MCF 10A (cell line): ENCODE measurements at regions of chr1 and their contacts with region 1.

Region 1: DNA sequence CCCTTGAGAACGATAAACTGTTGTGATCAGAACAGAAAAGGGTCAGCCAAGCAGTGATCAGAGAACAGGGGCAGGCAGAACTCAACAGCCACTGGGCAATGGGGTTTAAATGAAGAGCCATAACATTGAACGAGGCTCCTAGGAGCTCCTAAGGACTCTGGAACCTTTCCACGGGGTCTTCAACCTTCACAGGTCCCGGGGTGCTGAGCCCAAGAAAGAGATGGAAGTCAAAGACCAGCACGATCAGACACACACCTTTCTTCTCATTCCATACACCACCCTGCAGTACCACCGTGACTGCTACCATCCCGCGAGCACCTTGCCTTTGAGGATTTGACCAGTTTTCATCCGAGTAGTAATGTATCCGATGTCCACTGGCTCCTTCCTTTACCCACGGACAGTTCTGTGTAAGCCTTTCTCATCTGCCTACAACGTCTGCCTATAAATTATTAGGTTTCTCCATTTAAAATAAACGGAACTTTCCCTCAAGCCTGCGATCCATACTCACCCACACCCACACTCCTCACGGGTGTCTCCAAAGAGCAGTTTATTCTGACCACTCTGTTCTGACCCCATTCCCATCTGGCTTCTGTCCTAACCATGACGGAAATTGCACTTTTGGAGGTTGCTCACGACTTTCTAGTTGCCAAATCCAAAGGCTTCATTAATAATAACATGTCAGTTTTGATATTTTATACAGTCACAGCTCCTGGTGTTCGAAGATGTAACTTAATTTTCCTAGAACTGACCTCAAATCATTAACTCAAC is 16.8 kb upstream of the HHAT start:
- DNase-seq: no peak
- H3K4me3 Mint-ChIP-seq: no peak overlapping the region
- H3K27ac Mint-ChIP-seq: no peak overlapping the region
- H3K4me1 Mint-ChIP-seq: peaks cover 6% of the 10 kb centered on the region
- H3K27me3 Mint-ChIP-seq: peaks cover 36% of the 10 kb centered on the region
- CTCF ChIP-seq: no peak

Region 2: DNA sequence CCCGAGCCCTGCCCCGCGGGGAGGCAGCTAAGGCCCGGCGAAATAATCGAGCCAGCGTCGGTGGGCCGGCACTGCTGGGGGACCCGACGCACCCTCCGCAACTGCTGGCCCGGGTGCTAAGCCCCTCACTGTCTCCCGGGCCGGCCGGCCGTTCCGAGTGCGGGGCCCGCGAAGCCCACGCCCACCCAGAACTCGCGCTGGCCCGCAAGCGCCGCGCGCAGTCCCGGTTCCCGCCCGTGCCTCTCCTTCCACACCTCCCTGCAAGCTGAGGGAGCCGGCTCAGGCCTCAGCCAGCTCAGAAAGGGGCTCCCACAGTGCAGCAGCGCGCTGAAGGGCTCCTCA is 422.9 kb before region 1 on chr1:
- CTCF ChIA-PET with region 1: no interaction called
- POLR2A ChIA-PET with region 1: no interaction called
- intact Hi-C with region 1: no loop called
- DNase-seq: no peak
- H3K4me3 Mint-ChIP-seq: no peak overlapping the region
- H3K27ac Mint-ChIP-seq: no peak overlapping the region
- H3K4me1 Mint-ChIP-seq: peaks cover 54% of the 10 kb centered on the region
- H3K27me3 Mint-ChIP-seq: no peaks in the 10 kb centered on the region
- CTCF ChIP-seq: no peak

Region 3: GRCh38 chr1:210099921-210100320 is 212.0 kb before region 1 on chr1:
- CTCF ChIA-PET with region 1: no interaction called
- POLR2A ChIA-PET with region 1: no interaction called
- intact Hi-C with region 1: no loop called
- DNase-seq: no peak
- H3K4me3 Mint-ChIP-seq: no peak overlapping the region
- H3K27ac Mint-ChIP-seq: no peak overlapping the region
- H3K4me1 Mint-ChIP-seq: no peaks in the 10 kb centered on the region
- H3K27me3 Mint-ChIP-seq: peaks cover 64% of the 10 kb centered on the region
- CTCF ChIP-seq: no peak

Region 4: DNA sequence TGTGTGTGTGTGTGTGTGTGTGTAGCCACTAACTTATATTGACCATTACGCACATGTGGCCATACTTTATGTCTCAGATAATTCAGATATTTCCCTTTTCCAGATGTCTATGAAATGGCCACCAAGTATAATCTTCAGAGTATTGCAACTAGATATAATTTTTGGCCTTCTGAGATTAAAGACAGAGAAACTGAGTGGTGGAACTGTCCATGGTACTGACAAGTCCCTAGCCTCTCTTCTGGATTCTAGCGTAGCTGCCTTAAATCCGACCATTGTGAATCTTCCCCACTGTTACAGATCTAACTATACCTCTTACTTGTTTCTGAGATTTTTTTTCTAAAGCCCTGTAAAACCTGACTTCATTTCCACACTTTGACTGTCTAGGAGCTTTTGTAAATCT is 179.3 kb before region 1 on chr1:
- CTCF ChIA-PET with region 1: interaction called, 20 read pairs
- POLR2A ChIA-PET with region 1: interaction called, 3 read pairs
- intact Hi-C with region 1: no loop called
- DNase-seq: peak; percentile 69
- H3K4me3 Mint-ChIP-seq: no peak overlapping the region
- H3K27ac Mint-ChIP-seq: no peak overlapping the region
- H3K4me1 Mint-ChIP-seq: no peaks in the 10 kb centered on the region
- H3K27me3 Mint-ChIP-seq: peaks cover 42% of the 10 kb centered on the region
- CTCF ChIP-seq: no peak

Region 5: DNA sequence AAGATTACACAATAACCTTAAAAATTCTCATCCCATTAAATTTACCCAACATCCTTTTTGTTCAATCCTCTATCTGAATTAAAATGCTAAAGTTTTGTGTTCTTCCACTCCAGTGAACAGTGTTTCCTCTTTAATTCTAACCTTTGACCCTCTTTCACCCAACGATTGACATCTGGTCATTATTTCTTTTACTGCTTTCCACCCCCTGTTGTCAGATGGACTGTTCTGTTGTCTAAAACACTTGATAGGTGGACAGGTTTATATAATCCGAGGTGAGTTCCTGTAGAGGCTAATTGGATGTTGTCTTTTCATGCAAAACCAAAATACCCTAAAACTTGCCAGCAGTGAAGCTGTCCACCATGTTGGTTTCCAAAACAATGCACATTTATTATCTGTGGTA is 152.7 kb before region 1 on chr1:
- CTCF ChIA-PET with region 1: interaction called, 11 read pairs
- POLR2A ChIA-PET with region 1: no interaction called
- intact Hi-C with region 1: no loop called
- DNase-seq: no peak
- H3K4me3 Mint-ChIP-seq: no peak overlapping the region
- H3K27ac Mint-ChIP-seq: no peak overlapping the region
- H3K4me1 Mint-ChIP-seq: no peaks in the 10 kb centered on the region
- H3K27me3 Mint-ChIP-seq: no peaks in the 10 kb centered on the region
- CTCF ChIP-seq: no peak

Region 6: DNA sequence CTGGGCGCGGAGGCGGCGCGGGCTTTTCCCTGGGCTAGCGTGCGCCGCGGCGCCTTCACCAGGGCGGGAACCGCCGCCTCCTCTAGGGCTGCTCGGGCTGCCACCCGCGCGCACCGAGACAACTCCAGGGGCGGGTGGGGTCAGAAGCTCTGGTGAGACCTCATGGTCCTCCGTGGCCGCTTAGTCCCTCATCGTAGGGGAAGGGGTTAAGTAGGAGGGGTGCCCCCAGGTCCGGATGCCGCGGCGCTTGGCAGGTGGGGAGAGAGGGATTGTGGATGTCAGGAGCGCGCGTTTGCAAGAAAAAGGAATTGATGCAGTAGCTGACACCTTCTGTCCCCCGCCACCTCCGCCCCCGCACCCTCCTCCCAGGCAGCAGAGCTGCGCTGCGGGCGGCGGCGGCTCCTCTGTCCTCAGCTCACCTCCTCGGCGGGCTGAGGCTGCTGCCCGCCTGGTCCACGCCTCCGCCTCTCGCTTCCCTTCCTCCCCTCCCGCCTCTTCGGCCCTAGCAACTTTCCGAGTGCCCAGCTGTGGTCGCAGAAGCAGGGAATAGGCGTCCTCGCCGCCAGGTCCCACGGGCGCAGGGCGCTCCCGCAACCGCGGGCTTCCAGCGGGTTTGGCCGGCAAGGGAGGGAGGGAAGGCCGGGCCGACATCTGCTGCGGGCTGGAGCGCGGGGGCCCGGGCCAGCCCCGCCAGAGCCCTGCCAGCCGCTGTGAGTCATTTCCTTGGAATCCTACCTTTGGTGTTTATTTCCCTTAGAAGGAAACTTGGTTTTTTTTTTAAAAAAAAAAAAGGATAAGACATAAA is 78.5 kb before region 1 on chr1:
- CTCF ChIA-PET with region 1: interaction called, 7 read pairs
- POLR2A ChIA-PET with region 1: interaction called, 5 read pairs
- intact Hi-C with region 1: loop called (anchors 2 kb)
- DNase-seq: peak; percentile 89
- H3K4me3 Mint-ChIP-seq: peak overlapping the region; percentile 69
- H3K27ac Mint-ChIP-seq: no peak overlapping the region
- H3K4me1 Mint-ChIP-seq: peaks cover 17% of the 10 kb centered on the region
- H3K27me3 Mint-ChIP-seq: no peaks in the 10 kb centered on the region
- CTCF ChIP-seq: no peak

Region 7: DNA sequence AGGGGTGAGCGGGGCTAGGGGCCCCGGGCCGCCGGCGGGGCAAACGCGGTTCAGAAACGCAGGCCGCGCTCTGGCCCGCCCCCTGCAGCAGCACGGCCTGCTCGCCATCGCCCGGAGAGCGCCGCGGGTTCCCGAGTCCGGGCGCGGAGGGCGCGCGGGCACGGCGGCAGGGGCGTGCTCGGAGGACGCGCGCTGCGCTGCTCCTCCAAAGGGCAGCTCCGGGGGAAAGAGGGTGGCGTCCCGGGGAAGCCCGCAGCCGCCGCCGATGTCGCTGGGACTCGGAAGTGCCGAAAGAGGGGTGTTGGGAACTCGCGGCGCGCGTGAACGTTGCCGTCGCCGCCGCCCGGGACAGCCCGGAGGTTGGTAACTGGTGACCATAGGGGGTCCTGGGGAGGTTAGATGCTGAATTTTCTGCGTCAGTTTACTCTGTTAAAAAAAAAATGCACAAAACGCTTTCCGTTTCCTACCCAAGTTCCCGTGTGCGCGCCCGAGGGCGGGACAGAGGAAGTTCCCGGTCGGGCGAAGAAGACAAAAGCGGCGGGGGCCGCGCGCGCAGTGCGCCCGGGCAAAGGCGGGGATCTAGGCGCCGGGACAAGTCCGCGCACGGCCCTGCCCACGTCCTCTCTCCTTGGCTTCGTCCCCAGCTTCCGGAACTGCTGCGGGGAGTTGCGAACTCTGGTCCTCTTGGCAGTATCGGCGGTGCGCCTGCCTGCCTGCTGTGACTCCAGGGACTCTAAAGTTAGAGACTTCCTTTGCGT is 17.0 kb after region 1 on chr1 and contains the start of gene HHAT:
- CTCF ChIA-PET with region 1: interaction called, 25 read pairs
- POLR2A ChIA-PET with region 1: interaction called, 7 read pairs
- intact Hi-C with region 1: no loop called
- DNase-seq: peak; percentile 95
- H3K4me3 Mint-ChIP-seq: peak within 1 kb of the TSS; percentile 81
- H3K27ac Mint-ChIP-seq: peak within 1 kb of the TSS; percentile 87
- H3K4me1 Mint-ChIP-seq: peaks cover 26% of the 10 kb centered on the region
- H3K27me3 Mint-ChIP-seq: no peaks in the 10 kb centered on the region
- CTCF ChIP-seq: no peak
- total RNA-seq, gene HHAT: 4.6 and 4.9 TPM in 2 replicates

Region 8: DNA sequence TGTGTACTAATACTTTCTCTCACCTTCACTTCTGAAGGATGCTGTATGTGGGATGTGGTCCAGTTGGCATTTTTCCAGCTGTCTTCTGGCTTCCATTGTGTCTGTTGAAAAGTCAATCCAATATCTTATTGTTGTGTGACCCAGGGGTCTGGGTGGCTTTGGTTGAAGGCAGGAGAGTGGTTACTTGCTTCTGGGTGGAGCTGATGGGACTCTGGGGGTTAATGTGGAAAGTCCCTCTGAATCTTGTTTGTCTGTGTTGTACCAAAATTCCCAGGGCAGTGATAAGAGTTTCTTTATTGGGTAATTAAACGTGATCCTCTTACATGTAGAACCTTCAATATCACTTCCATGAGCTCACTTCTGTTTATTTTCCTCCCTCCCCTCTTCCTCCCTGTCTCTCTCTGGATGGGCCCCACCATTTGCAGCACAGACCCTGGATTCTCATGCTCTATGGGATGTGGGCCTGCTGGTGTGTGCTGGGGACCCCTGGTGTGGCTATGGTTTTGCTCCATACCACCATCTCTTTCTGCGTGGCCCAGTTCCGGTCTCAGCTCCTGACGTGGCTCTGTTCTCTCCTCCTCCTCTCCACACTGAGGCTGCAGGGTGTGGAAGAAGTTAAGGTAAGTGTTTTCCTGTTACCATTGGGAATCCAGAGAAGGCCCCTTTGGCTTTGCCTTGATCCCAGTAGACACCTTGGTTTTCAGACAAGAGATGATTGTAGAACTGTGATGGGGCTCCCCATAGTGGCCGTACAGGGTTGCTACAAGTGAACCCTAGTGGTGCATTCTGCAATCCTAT is 88.3 kb after region 1 on chr1:
- CTCF ChIA-PET with region 1: interaction called, 57 read pairs
- POLR2A ChIA-PET with region 1: interaction called, 4 read pairs
- intact Hi-C with region 1: loop called (anchors 1 kb)
- DNase-seq: peak; percentile 88
- H3K4me3 Mint-ChIP-seq: no peak overlapping the region
- H3K27ac Mint-ChIP-seq: no peak overlapping the region
- H3K4me1 Mint-ChIP-seq: peaks cover 7% of the 10 kb centered on the region
- H3K27me3 Mint-ChIP-seq: no peaks in the 10 kb centered on the region
- CTCF ChIP-seq: peak; percentile 98